A549 (cell line): ENCODE measurements at regions of chr20 and their contacts with region 1.

Region 1: GRCh38 chr20:24992487-24993205 is at the start of gene APMAP:
- DNase-seq: peak; percentile 94 to 97
- ATAC-seq: peak; percentile 88 to 96
- H3K4me3 ChIP-seq: peak within 1 kb of the TSS; percentile 85
- H3K27ac ChIP-seq: peak within 1 kb of the TSS; percentile 86 to 95
- H3K4me1 ChIP-seq: peaks cover 40% of the 10 kb centered on the region
- CTCF ChIP-seq: no peak
- EP300 ChIP-seq: no peak
- POLR2A ChIP-seq: peak; percentile 97
- RAD21 ChIP-seq: no peak
- polyA plus RNA-seq, gene APMAP: 113 and 118 TPM in 2 replicates

Region 2: DNA sequence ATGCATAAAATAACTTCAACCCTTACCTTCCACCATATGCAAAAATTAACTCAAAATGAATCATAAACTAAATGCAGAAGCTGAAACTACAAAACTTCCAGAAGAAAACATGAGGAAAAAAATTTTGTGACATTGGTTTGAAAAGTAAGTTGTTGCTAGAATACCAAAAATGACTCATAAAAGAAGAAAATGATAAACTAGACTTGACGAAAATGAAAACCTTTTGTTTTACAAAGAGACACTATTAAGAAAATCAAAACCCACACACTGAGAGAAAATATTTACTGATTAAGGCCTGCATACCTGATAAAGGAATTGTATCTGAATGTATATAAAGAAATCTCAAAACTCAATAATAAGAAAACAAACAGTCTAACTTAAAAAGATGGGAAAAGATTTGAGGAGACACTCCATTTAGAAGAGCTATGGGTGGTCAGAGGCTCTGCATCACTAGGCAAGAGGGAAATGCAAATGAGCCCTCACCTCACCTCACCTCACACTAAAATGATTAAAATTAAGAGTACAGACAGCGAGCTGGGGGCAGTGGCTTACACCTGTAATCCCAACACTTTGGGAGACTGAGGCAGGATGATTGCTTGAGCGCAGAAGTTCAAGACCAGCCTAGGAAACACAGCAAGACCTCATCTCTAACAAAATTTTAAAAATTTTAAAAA is 141.2 kb before region 1 on chr20:
- CTCF ChIA-PET with region 1: no interaction called
- POLR2A ChIA-PET with region 1: no interaction called
- DNase-seq: no peak
- ATAC-seq: no peak
- H3K4me3 ChIP-seq: no peak overlapping the region
- H3K27ac ChIP-seq: no peak overlapping the region
- H3K4me1 ChIP-seq: no peaks in the 10 kb centered on the region
- CTCF ChIP-seq: no peak
- EP300 ChIP-seq: no peak
- POLR2A ChIP-seq: no peak
- RAD21 ChIP-seq: no peak

Region 3: GRCh38 chr20:25076731-25077609 is 84.3 kb after region 1 on chr20:
- CTCF ChIA-PET with region 1: interaction called, 12 read pairs
- POLR2A ChIA-PET with region 1: no interaction called
- DNase-seq: peak; percentile 80 to 89
- ATAC-seq: peak; percentile 72 to 80
- H3K4me3 ChIP-seq: peak overlapping the region; percentile 40
- H3K27ac ChIP-seq: peak overlapping the region; percentile 71 to 80
- H3K4me1 ChIP-seq: peaks cover 40% of the 10 kb centered on the region
- CTCF ChIP-seq: peak; percentile 60
- EP300 ChIP-seq: peak in 1 of 2 experiments; percentile 17; a peak in 1 of 5 replicates
- POLR2A ChIP-seq: no peak
- RAD21 ChIP-seq: peak; percentile 44 to 53; a peak in 3 of 5 replicates

Region 4: DNA sequence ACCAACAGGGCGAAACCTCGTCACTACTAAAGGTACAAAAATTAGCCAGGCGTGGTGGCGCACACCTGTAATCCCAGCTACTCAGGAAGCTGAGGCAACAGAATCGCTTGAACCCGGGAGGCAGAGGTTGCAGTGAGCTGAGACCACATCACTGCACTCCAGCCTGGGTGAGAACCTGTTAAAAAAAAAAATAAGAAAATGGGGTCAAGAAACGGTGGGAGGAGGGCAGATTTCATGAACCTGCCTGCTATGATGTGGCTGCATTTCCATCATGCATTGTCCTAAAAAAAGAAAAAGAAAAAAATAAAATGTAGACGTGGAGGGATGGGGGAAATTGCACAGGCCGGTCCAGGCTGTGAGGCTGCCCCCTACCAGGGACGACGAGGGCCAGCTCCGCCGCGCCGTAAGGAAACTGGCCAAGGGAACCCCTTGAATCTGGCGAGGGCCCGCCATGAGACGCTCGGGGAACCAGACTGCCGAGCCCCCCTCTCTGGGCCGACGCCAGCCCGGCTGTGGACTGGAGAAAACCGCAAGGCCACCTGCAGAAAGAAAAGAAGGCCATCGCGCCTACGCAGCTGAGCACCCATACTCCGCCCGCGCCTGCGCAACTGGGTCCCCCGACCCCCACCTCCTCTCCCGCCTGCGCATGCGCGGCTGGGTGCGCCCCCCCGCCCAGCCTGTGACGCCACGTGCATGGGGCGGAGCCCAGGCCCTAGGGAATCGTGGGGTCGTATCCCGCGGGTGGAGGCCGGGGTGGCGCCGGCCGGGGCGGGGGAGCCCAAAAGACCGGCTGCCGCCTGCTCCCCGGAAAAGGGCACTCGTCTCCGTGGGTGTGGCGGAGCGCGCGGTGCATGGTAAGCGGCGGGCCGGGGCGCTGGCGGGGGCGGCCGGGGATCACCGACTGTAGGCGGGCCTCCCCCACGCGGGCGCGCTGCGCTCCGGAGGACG is 202.6 kb after region 1 on chr20 and contains the start of gene ENTPD6:
- CTCF ChIA-PET with region 1: interaction called, 35 read pairs
- POLR2A ChIA-PET with region 1: no interaction called
- DNase-seq: peak; percentile 93 to 98
- ATAC-seq: peak; percentile 84 to 89
- H3K4me3 ChIP-seq: peak within 1 kb of the TSS; percentile 95
- H3K27ac ChIP-seq: peak within 1 kb of the TSS; percentile 92 to 94
- H3K4me1 ChIP-seq: peaks cover 28% of the 10 kb centered on the region
- CTCF ChIP-seq: peak; percentile 46
- EP300 ChIP-seq: no peak
- POLR2A ChIP-seq: peak; percentile 94
- RAD21 ChIP-seq: peak; percentile 13 to 35; a peak in 3 of 5 replicates
- polyA plus RNA-seq, gene ENTPD6: 85.7 and 95.4 TPM in 2 replicates

Region 5: GRCh38 chr20:25254986-25255680 is 262.5 kb after region 1 on chr20:
- CTCF ChIA-PET with region 1: interaction called, 30 read pairs
- POLR2A ChIA-PET with region 1: interaction called, 3 read pairs
- DNase-seq: no peak
- ATAC-seq: peak; percentile 63 to 78; a peak in 5 of 6 replicates
- H3K4me3 ChIP-seq: no peak overlapping the region
- H3K27ac ChIP-seq: peak overlapping the region; percentile 13 to 60; a peak in 4 of 6 replicates
- H3K4me1 ChIP-seq: peaks cover 58% of the 10 kb centered on the region
- CTCF ChIP-seq: 0 out of 3 replicates have a peak, but pooled peaks have one; percentile 9
- EP300 ChIP-seq: no peak
- POLR2A ChIP-seq: no peak
- RAD21 ChIP-seq: 0 out of 5 replicates have a peak, but pooled peaks of 1 of the 2 experiments have one; percentile 14

Region 6: DNA sequence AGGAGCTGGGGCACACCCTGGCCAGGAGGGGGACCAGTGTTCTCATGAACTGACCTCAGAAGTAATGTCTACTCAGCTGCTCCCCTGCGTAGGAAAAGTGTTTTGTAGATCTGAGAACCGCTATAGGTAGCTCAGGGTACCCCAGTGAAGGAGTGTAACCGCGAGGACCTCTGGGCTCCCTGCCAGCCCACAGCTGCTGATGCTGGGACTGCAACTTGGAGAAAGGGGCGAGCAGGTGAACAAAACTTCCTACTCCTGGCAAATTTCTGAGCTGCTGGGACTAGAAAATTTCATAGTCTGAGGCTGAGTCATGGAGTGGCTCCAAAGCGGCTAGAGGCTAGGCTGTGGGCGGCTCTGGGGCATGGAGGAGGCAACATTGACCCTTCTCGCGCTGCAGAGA is 307.2 kb after region 1 on chr20:
- CTCF ChIA-PET with region 1: interaction called, 42 read pairs
- POLR2A ChIA-PET with region 1: no interaction called
- DNase-seq: no peak
- ATAC-seq: peak in 1 of 2 experiments; percentile 9; a peak in 2 of 6 replicates
- H3K4me3 ChIP-seq: no peak overlapping the region
- H3K27ac ChIP-seq: peak overlapping the region; percentile 53 to 72
- H3K4me1 ChIP-seq: peaks cover 61% of the 10 kb centered on the region
- CTCF ChIP-seq: no peak
- EP300 ChIP-seq: no peak
- POLR2A ChIP-seq: no peak
- RAD21 ChIP-seq: no peak

Region 7: DNA sequence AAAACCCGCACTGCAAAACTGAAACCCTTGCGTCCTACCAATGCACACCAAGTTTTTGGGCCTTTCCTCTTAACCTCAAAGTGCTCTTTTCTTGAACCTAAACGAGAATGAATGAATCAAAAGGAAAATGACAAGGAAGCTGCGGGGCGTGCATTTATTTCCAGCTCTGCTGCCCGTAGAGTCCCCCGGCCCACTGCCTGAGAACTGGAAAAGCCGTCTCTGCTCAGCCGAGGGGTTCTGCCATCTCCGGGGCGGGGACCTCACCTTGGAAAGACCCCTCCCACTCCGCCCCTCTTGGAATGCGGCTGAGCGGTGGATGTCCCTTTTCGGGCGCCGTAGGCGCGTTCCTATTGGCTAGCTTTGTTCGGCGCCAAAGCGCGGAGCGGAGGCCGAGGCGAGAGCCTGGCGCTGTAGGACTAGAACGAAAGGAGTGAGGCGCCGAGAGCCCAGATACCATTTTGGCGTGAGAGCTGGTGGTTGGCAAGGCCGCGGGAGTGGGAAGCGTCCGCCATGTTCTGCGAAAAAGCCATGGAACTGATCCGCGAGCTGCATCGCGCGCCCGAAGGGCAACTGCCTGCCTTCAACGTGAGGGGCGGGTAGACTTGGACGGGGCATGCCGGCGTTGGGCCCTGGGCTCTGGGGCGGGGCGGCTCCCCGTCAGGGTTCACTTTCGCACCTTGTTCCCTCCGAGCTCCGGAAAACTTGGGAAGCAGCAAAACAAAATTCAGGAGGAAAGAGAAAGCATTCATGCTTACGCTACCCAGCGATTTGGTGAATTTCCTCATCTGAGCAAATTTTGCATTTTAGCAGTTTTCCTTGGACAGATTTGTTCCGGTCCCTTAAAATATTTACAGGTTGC is 414.9 kb after region 1 on chr20 and contains the start of gene GINS1:
- CTCF ChIA-PET with region 1: interaction called, 22 read pairs
- POLR2A ChIA-PET with region 1: interaction called, 3 read pairs
- DNase-seq: peak; percentile 96 to 98
- ATAC-seq: peak; percentile 96 to 97
- H3K4me3 ChIP-seq: peak within 1 kb of the TSS; percentile 81
- H3K27ac ChIP-seq: peak within 1 kb of the TSS; percentile 85 to 90
- H3K4me1 ChIP-seq: peaks cover 17% of the 10 kb centered on the region
- CTCF ChIP-seq: no peak
- EP300 ChIP-seq: no peak
- POLR2A ChIP-seq: peak; percentile 67
- RAD21 ChIP-seq: no peak
- polyA plus RNA-seq, gene GINS1: 33.5 and 46.4 TPM in 2 replicates

Region 8: GRCh38 chr20:25535762-25536161 is 543.1 kb after region 1 on chr20:
- CTCF ChIA-PET with region 1: no interaction called
- POLR2A ChIA-PET with region 1: no interaction called
- DNase-seq: no peak
- ATAC-seq: no peak
- H3K4me3 ChIP-seq: no peak overlapping the region
- H3K27ac ChIP-seq: no peak overlapping the region
- H3K4me1 ChIP-seq: peaks cover 14% of the 10 kb centered on the region; the same call in 2 of the 3 replicates
- CTCF ChIP-seq: no peak
- EP300 ChIP-seq: no peak
- POLR2A ChIP-seq: no peak
- RAD21 ChIP-seq: no peak